ENCODE measurements at regions of chr6 and their contacts with region 1.

Region 1: GRCh38 chr6:20148433-20148832 is 63.8 kb downstream of the MBOAT1 start:
- DNase-seq: no peak
- ATAC-seq: no peak
- H3K4me3 ChIP-seq: no peak overlapping the region
- H3K27ac ChIP-seq: no peak overlapping the region
- H3K4me1 ChIP-seq: no peaks in the 10 kb centered on the region
- H3K27me3 ChIP-seq: no peaks in the 10 kb centered on the region
- CTCF ChIP-seq: no peak
- EP300 ChIP-seq: no peak
- POLR2A ChIP-seq: no peak
- RAD21 ChIP-seq: no peak

Region 2: GRCh38 chr6:20255428-20255827 is 107.0 kb after region 1 on chr6:
- CTCF ChIA-PET with region 1: no interaction called
- POLR2A ChIA-PET with region 1: no interaction called
- RAD21 ChIA-PET with region 1: no interaction called
- SMC1A ChIA-PET with region 1: no interaction called
- in situ Hi-C with region 1: no loop called
- intact Hi-C with region 1: no loop called
- DNase-seq: no peak
- ATAC-seq: no peak
- H3K4me3 ChIP-seq: no peak overlapping the region
- H3K27ac ChIP-seq: no peak overlapping the region
- H3K4me1 ChIP-seq: no peaks in the 10 kb centered on the region
- H3K27me3 ChIP-seq: no peaks in the 10 kb centered on the region
- CTCF ChIP-seq: no peak
- EP300 ChIP-seq: no peak
- POLR2A ChIP-seq: no peak
- RAD21 ChIP-seq: no peak

Region 3: DNA sequence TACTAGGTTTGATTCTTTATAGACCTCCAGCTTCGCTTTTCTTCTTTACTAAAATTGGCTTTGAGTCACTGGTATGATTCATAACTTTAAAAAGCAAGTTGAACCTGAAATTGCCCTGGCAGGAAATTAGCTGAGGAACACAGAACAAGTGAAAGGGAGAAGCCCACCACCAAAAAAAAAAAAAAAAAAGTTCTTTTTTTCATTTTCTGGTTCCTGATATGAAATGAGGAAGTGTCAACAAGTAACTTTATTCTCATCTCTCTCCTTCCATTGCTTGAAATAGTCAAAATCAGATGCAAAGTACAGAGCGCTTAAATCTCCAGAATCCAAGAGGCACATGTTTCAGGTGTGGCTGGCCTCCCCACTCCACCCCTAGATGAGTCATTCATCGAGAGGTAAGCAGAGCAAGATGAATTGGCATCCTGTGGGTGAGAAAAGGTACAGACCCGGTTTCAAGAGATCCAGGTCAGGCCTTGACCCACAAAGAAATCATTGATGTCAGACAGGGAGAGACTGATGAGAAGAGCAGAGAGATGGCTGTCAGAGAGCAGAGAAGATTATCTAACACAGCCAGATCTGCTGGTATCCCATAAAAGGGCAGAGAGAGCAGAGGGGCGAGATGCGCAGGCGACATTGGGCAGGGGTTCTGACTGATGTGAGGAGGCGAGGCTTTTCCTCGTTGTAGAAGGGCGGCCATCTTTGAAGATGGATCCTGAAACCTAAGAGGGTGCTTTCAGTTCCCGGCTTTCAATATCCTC is 118.6 kb after region 1 on chr6:
- CTCF ChIA-PET with region 1: interaction called, 3 read pairs
- POLR2A ChIA-PET with region 1: interaction called, 10 read pairs
- RAD21 ChIA-PET with region 1: no interaction called
- SMC1A ChIA-PET with region 1: no interaction called
- in situ Hi-C with region 1: no loop called
- intact Hi-C with region 1: no loop called
- DNase-seq: peak; percentile 12
- ATAC-seq: peak; percentile 94
- H3K4me3 ChIP-seq: no peak overlapping the region
- H3K27ac ChIP-seq: peak overlapping the region; percentile 35
- H3K4me1 ChIP-seq: peaks cover 7% of the 10 kb centered on the region
- H3K27me3 ChIP-seq: no peaks in the 10 kb centered on the region; a peak in 1 of 4 replicates
- CTCF ChIP-seq: no peak
- EP300 ChIP-seq: no peak
- POLR2A ChIP-seq: no peak
- RAD21 ChIP-seq: no peak

Region 4: GRCh38 chr6:20599302-20600051 is 451.0 kb after region 1 on chr6:
- CTCF ChIA-PET with region 1: no interaction called
- POLR2A ChIA-PET with region 1: no interaction called
- RAD21 ChIA-PET with region 1: no interaction called
- SMC1A ChIA-PET with region 1: no interaction called
- in situ Hi-C with region 1: no loop called
- intact Hi-C with region 1: no loop called
- DNase-seq: no peak
- ATAC-seq: peak; percentile 86
- H3K4me3 ChIP-seq: no peak overlapping the region
- H3K27ac ChIP-seq: no peak overlapping the region
- H3K4me1 ChIP-seq: no peaks in the 10 kb centered on the region
- H3K27me3 ChIP-seq: no peaks in the 10 kb centered on the region
- CTCF ChIP-seq: no peak
- EP300 ChIP-seq: no peak
- POLR2A ChIP-seq: no peak
- RAD21 ChIP-seq: no peak

Measured in GM12878 (cell line).